Dorsolateral prefrontal cortex (tissue), 120 donors: ENCODE measurements at regions of chr1 and their contacts with region 1.

Region 1: GRCh38 chr1:236103646-236104218 is 38.6 kb upstream of the GPR137B start:
- DNase-seq: peak in 6 of 10 donors; percentile 30 to 61 (median 56)
- H3K4me3 ChIP-seq: peak overlapping the region in 19 of 59 donors; percentile 12 to 47 (median 29)
- H3K27ac ChIP-seq: no peak overlapping the region
- H3K27me3 ChIP-seq: peaks cover 0 to 23% (median 0%) of the 10 kb centered on the region in 45 donors
- CTCF ChIP-seq: peak; percentile 69 to 97 (median 89)

Region 2: GRCh38 chr1:236345728-236346127 is 242.0 kb after region 1 on chr1:
- intact Hi-C with region 1: loop called in 1 of 2 experiments (anchors 2 kb)
- DNase-seq: no peak
- H3K4me3 ChIP-seq: no peak overlapping the region
- H3K27ac ChIP-seq: no peak overlapping the region
- H3K27me3 ChIP-seq: peaks cover 0 to 7% (median 0%) of the 10 kb centered on the region in 45 donors
- CTCF ChIP-seq: peak in 8 of 56 donors; percentile 11 to 29 (median 16)

Region 3: GRCh38 chr1:236489710-236490377 is 386.1 kb after region 1 on chr1:
- intact Hi-C with region 1: loop called (anchors 2 kb)
- DNase-seq: no peak
- H3K4me3 ChIP-seq: no peak overlapping the region
- H3K27ac ChIP-seq: no peak overlapping the region
- H3K27me3 ChIP-seq: no peaks in the 10 kb centered on the region
- CTCF ChIP-seq: peak; percentile 48 to 89 (median 74)